AG04449 (cell line): ENCODE measurements at regions of chr5 and their contacts with region 1.

Region 1: DNA sequence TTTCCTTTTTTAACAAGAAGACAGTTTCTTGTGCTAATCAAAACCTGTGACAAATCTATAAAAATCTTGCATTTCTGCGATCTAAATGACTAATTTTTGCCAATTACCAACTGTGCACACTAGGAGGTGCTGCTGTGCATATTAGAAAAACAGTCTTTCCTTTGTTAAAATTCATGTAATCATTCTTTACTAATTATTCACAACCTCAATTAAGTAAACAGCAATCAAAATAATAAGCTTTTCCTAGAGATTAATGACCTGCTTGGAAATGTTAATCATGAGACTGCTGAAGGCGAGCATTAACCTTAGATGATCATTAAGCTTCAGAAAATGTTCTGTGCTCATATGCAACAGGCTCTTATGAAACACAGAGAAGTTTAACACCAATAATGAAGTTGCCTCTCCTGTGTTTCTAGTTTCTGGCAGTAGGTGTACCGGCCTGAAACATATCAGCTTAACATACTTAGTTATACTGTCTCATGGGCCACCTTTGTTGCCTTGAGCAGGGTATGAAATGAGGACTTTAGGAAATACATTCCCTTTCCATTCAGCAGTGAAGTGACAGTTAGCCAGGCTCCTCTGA is 17.7 kb downstream of the RFESD start:
- DNase-seq: no peak
- H3K4me3 ChIP-seq: no peak overlapping the region
- CTCF ChIP-seq: peak; percentile 59

Region 2: DNA sequence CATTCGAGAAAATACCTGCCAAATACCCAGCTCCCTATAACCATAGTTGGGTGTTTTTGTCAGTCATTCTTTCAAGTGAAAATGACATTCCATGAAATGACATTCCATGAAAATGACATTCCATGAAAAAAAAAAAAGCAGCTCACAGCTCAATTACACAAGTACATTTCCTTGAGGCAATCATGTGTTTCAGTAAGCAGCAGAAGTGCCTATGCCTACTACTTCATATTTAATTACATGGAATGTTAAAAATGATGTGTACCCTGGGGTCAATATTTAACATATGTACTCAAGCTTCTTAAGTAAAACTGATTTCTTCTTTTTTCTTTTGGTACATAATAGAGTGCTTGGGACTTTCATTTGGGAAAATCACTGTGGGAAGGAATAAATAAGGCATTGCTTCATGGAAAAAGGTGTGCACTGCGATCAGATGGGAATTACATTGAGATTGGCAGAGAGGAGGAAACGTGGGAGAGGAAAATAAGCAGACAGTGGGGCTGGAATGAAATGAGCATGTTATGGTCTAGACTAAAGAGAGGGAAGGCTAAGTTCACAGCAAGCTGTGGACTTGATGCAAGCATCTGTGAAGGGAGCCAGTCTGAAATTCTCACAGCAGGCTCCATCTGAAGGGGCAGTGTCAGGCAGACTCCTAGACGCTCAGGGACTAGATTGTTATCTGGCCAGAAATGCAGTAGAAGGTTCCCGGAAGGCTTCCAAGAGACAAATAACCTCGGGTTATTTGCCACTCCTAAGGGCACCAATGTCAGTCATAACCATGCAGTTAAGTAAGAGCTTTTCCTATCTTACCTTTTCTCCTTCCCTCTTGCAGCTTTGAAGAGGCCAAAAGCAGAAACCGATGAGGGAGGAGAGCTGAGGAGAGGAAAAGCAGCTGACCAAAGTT is 33.7 kb after region 1 on chr5:
- CTCF ChIA-PET with region 1: interaction called, 37 read pairs
- POLR2A ChIA-PET with region 1: no interaction called
- DNase-seq: no peak
- H3K4me3 ChIP-seq: no peak overlapping the region
- CTCF ChIP-seq: no peak

Region 3: GRCh38 chr5:95760273-95761191 is 96.2 kb after region 1 on chr5:
- CTCF ChIA-PET with region 1: interaction called, 16 read pairs
- POLR2A ChIA-PET with region 1: interaction called, 5 read pairs
- DNase-seq: peak; percentile 99
- H3K4me3 ChIP-seq: peak overlapping the region; percentile 30
- CTCF ChIP-seq: no peak

Region 4: DNA sequence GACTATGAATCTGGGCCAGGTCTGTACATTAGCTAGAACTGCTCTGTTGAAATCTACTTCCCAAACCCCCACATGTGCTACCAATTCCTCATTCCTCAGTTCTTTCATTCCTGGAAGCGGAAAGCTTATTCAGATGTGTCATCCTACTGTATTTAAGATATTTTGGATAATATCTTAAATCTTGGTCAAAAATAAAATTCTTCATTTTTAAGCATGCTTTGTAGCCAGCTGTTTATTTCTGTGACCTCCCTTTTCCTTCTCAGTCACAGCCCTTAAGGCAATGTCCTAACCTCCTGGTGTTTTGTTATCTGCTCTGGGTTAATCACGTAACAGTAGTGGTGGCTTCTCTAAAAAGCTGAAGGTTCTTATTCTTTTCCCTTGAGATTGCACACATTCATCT is 122.6 kb after region 1 on chr5:
- CTCF ChIA-PET with region 1: interaction called, 41 read pairs
- POLR2A ChIA-PET with region 1: no interaction called
- DNase-seq: no peak
- H3K4me3 ChIP-seq: no peak overlapping the region
- CTCF ChIP-seq: no peak

Region 5: DNA sequence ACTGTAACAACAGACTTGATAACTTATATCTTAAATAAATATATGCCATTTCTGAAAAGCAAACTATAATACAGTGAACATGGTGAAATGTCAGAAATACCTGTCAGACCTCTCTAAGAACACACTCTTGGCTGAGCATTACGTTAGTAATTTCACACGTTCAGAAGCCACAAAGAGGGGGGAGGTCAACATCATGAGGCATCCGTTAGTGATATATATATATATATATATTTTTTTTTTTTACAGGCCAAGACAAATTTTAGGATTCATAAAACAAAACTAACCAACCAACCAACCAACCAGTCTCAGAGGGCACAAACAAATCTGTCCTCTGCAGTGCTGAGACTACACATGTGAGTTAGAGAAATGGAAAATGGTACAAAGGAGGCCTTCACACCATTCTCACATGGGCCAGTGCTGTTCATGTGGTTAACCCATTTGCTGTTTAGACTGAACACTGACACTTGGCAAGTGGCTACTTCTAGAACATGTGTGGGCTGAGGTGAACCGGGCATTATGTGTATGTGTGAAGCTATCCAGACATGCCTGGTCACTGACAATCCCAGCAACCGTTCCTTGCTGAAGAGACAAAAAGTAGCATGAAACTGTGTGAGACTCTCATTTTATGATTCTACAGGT is 242.9 kb after region 1 on chr5:
- CTCF ChIA-PET with region 1: no interaction called
- POLR2A ChIA-PET with region 1: no interaction called
- DNase-seq: no peak
- H3K4me3 ChIP-seq: no peak overlapping the region
- CTCF ChIP-seq: no peak